ENCODE measurements at regions of chr15 and their contacts with region 1.

Region 1: GRCh38 chr15:38508647-38509046 is 54.7 kb downstream of the FAM98B start:
- DNase-seq: peak; percentile 33
- ATAC-seq: peak; percentile 78
- H3K4me3 Mint-ChIP-seq: no peak overlapping the region
- H3K27ac Mint-ChIP-seq: peak overlapping the region; percentile 93
- H3K4me1 Mint-ChIP-seq: peaks cover 38% of the 10 kb centered on the region
- H3K27me3 Mint-ChIP-seq: no peaks in the 10 kb centered on the region
- CTCF ChIP-seq: no peak

Region 2: GRCh38 chr15:38266247-38266986 is 242.2 kb before region 1 on chr15:
- CTCF ChIA-PET with region 1: no interaction called
- POLR2A ChIA-PET with region 1: no interaction called
- intact Hi-C with region 1: no loop called
- DNase-seq: no peak
- ATAC-seq: no peak
- H3K4me3 Mint-ChIP-seq: no peak overlapping the region
- H3K27ac Mint-ChIP-seq: no peak overlapping the region
- H3K4me1 Mint-ChIP-seq: no peaks in the 10 kb centered on the region
- H3K27me3 Mint-ChIP-seq: no peaks in the 10 kb centered on the region
- CTCF ChIP-seq: no peak

Region 3: DNA sequence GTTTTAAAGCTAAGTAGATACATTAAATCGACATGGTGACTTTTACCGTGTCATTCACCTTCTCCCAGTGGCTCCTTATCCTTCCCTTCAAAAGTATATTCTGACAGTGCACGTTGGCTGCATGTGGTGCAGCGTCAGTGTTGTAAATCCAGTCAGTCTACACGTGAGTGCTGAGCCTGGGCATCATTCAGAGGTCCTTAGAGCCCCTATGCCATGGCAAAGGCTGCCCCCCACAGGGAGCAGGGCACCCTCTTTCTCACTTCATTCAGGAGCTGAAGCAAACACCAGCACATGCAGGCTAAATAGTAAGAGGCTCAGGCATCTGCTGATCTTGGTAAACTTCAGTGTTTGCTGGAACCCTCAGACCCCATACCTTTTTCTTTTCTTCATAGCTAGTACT is 12.7 kb after region 1 on chr15:
- CTCF ChIA-PET with region 1: interaction called, 21 read pairs
- POLR2A ChIA-PET with region 1: interaction called, 10 read pairs
- intact Hi-C with region 1: no loop called
- DNase-seq: no peak
- ATAC-seq: no peak
- H3K4me3 Mint-ChIP-seq: no peak overlapping the region
- H3K27ac Mint-ChIP-seq: peak overlapping the region; percentile 72
- H3K4me1 Mint-ChIP-seq: peaks cover 70% of the 10 kb centered on the region
- H3K27me3 Mint-ChIP-seq: no peaks in the 10 kb centered on the region
- CTCF ChIP-seq: no peak

Measured in activated CD8-positive, alpha-beta T cell treated with anti-CD3 and anti-CD28 coated beads for 36 hours (primary cell).